Mucosa of descending colon (tissue), 3 donors: ENCODE measurements at regions of chr22 and their contacts with region 1.

Region 1: DNA sequence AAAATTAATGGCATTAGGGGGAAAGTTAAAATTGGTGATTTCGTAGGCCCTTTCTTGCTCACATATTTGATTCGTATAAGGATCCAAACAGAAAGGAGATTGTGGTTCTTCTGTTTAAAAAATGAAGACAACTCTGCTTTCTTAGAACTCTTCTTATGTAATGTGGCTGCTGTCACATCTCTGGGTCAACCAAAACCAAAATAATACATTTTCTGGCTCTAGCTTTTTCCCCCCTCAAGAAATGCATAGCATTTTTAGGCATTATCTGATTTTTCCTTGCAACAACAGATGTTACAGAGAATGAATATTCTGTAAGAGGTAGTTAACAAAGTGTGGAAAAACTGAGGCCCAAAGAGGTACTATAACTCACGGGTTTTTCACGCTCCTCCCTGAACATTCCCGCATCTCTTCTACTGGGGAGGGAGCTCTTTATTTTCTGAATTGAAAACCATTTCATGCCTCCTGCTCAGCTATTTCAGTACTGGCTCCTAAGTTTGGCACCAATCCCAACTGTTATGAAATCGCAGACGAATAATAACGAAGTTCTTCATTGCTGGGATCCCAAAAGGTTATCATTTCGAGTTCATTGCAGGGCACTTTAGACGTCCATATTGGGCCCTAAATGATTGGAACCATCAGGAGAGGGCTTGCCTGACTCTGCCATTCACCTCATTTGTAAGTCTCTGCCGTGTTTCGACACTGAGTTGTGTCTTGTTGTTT is 17.1 kb downstream of the GRAP2 start:
- DNase-seq: no peak
- ATAC-seq: no peak
- H3K4me3 ChIP-seq: no peak overlapping the region
- H3K4me1 ChIP-seq: no peaks in the 10 kb centered on the region
- CTCF ChIP-seq: no peak

Region 2: GRCh38 chr22:39859903-39860588 is 57.9 kb before region 1 on chr22:
- intact Hi-C with region 1: loop called in 1 of 2 experiments (anchors 10 kb)
- DNase-seq: no peak
- ATAC-seq: no peak
- H3K4me3 ChIP-seq: no peak overlapping the region
- H3K4me1 ChIP-seq: no peaks in the 10 kb centered on the region
- CTCF ChIP-seq: no peak

Region 3: GRCh38 chr22:39873965-39874364 is 44.0 kb before region 1 on chr22:
- intact Hi-C with region 1: no loop called
- DNase-seq: no peak
- ATAC-seq: no peak
- H3K4me3 ChIP-seq: no peak overlapping the region
- H3K4me1 ChIP-seq: no peaks in the 10 kb centered on the region
- CTCF ChIP-seq: no peak

Region 4: DNA sequence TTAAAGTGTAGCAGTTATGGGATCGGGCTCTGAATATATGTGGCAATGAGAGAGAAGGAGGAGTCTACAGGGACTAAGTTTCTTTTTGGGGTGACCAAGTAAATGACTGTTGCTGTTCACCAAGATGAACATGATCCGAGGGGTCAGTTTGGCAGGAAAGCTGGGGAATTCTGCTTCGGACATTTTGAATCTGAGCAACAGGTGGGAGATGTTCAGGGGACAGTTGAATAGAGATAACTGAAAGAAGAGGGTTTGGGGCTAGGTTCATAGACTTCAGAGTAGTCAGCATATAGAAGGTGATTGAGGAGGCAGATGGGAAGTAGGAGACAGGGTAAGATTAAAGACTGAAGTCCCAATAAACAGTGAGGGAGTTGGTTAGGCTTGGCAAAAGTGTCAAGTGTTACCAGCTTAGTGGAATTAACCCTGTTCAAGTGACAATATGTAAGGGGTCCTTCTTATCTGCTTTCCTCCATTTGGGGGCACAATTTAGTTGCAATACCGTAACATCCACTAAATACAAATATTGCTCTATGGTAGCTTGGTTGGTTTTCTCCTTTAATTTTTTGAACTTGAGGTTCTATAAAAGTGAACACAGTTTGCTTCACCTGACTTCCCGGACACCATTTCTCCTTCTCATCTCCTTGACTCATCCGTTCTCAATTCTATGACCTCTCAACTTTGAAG is 21.5 kb before region 1 on chr22:
- intact Hi-C with region 1: no loop called
- DNase-seq: no peak
- ATAC-seq: no peak
- H3K4me3 ChIP-seq: no peak overlapping the region
- H3K4me1 ChIP-seq: no peaks in the 10 kb centered on the region
- CTCF ChIP-seq: no peak

Region 5: GRCh38 chr22:40220316-40221054 is 302.5 kb after region 1 on chr22:
- intact Hi-C with region 1: no loop called
- DNase-seq: no peak
- ATAC-seq: no peak
- H3K4me3 ChIP-seq: no peak overlapping the region
- H3K4me1 ChIP-seq: peaks cover 13% of the 10 kb centered on the region
- CTCF ChIP-seq: no peak